GM18951 (cell line): ENCODE measurements at regions of chr18 and their contacts with region 1.

Region 1: DNA sequence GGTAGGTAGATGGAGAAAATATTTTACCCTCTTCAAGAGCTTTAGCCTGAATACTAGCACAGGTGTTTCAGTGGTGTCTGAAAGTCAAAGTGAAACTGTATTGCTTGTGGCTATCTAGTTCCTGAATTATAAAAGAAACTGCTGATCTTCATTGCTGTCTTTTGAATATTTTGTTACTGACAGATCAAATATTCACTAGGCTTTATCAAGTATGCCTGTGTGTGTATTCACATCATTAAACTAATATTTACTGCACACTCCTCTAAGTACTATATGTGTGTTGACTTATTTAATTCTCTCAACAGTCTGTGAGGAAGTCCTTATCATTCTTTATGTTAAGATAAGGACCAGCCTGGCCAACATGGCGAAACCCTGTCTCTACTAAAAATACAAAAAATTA is 139.6 kb downstream of the SOCS6 start:
- POLR2A ChIP-seq: no peak

Region 2: GRCh38 chr18:68847219-68847837 is 1581.1 kb before region 1 on chr18:
- in situ Hi-C with region 1: loop called (anchors 25 kb)
- POLR2A ChIP-seq: no peak

Region 3: DNA sequence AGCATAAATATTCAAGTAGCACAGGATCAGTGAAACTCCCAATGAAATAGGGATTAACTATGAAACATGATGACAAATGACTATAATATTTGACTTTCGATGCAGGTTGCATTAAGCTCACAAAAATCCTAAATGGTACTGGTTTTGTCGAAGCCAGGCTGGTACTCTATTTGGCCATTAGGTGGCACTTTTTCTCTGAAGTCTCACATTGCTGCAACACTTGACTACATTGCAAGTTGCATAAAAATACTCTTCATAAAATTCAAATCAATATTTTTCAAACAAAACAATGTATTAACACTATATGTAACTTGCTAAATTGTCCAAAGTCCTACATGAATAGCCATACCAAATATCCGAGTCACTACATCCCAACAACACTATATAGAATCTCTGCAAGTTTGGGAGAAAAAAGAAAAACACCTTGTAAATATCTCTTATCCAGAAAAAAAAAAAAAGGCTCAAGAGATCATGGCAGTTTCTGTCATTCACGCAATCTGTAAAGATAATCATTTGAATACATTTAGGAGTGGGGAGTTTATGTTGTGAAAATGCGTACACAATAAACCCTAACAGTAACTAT is 232.5 kb before region 1 on chr18:
- in situ Hi-C with region 1: loop called (anchors 10 kb)
- POLR2A ChIP-seq: no peak